Vagina (tissue), 2 donors: ENCODE measurements at regions of chr13 and their contacts with region 1.

Region 1: GRCh38 chr13:105773863-105774538 is 761.5 kb downstream of the EFNB2 start:
- DNase-seq: no peak
- H3K4me3 ChIP-seq: no peak overlapping the region
- H3K27ac ChIP-seq: no peak overlapping the region
- H3K4me1 ChIP-seq: no peaks in the 10 kb centered on the region
- H3K27me3 ChIP-seq: no peaks in the 10 kb centered on the region
- CTCF ChIP-seq: no peak
- POLR2A ChIP-seq: no peak

Region 2: DNA sequence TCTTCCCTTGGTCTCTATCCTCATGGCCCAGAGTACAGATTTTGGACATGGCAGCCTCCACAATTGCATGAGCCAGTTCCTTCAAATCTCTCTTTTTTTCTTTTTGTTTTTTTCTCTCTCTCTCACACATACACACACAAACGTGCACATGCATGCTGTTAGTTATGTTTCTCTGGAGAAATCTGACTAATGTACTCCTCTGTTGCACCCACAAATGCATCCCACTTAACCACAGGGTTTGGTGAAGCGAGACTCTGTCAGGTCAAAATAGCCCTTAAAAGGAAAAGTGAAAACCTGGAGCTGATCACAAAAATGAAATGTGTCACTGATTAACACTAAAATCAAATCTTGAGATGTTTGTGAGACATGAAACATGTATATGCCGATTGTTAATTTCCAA is 1168.6 kb after region 1 on chr13:
- intact Hi-C with region 1: loop called (anchors 5 kb)
- DNase-seq: no peak
- H3K4me3 ChIP-seq: no peak overlapping the region
- H3K27ac ChIP-seq: no peak overlapping the region
- H3K4me1 ChIP-seq: no peaks in the 10 kb centered on the region
- H3K27me3 ChIP-seq: no peaks in the 10 kb centered on the region
- CTCF ChIP-seq: no peak
- POLR2A ChIP-seq: no peak